ENCODE measurements at regions of chr20 and their contacts with region 1.

Region 1: GRCh38 chr20:44388466-44389023 is 33.0 kb downstream of the HNF4A start:
- DNase-seq: peak; percentile 38
- H3K4me3 ChIP-seq: peak overlapping the region in 1 of 3 experiments; percentile 13
- H3K27ac ChIP-seq: no peak overlapping the region
- H3K4me1 ChIP-seq: peaks cover 16% of the 10 kb centered on the region
- H3K27me3 ChIP-seq: no peaks in the 10 kb centered on the region
- CTCF ChIP-seq: peak; percentile 90 to 94 (median 93)

Region 2: GRCh38 chr20:44210422-44211176 is 177.9 kb before region 1 on chr20 and contains the start of gene OSER1:
- dilution Hi-C with region 1: loop called (anchors 10 kb)
- DNase-seq: peak; percentile 91
- H3K4me3 ChIP-seq: peak within 1 kb of the TSS; percentile 82 to 96 (median 82)
- H3K27ac ChIP-seq: peak within 1 kb of the TSS; percentile 97
- H3K4me1 ChIP-seq: peaks cover 26% of the 10 kb centered on the region
- H3K27me3 ChIP-seq: no peaks in the 10 kb centered on the region
- CTCF ChIP-seq: no peak
- polyA plus RNA-seq, gene OSER1: 33.5 to 41.5 TPM (median 34.9 TPM) in 3 replicates

Region 3: DNA sequence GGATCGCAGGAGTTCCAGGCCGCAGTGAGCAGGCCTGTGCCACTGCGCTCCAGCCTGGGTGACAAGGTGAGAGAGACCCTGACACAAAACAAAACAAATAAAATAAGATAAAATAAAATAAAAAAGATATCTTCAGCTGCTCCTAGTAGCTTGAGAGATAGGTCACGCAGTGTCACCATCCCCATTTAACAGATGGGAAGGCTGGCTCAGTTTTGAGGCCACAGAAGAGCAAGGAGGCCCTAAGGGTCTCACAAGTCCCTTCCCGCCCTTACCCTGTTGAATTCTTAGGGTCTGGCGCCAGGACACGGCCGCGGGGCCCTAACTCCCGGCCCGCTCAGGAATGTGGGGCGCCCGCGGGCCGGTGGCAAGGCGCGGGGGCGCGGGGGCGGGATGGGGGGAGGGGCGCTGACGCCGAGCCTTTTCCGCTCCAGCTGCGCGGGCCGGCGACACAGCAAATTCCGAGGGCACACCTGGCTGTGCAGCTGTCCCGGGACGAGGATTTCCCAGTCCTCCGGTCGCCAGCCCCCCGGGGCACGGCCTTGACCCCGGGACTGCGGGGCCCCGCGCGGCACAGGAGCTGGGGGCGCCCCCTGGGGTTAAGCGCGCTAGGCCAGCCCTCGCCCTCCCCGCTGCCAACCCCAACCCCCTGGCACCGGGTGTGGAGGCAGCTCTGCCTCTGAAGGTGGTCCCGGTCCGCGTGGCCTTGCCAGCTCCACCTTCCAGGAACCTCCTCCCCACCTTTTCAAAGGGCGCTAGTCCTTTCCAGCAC is 62.0 kb before region 1 on chr20:
- dilution Hi-C with region 1: loop called (anchors 10 kb)
- DNase-seq: no peak
- H3K4me3 ChIP-seq: peak overlapping the region in 1 of 3 experiments; percentile 12
- H3K27ac ChIP-seq: no peak overlapping the region
- H3K4me1 ChIP-seq: no peaks in the 10 kb centered on the region
- H3K27me3 ChIP-seq: no peaks in the 10 kb centered on the region
- CTCF ChIP-seq: peak in 1 of 3 experiments; percentile 7

Region 4: GRCh38 chr20:44467289-44467883 is 78.8 kb after region 1 on chr20:
- dilution Hi-C with region 1: loop called (anchors 5 kb)
- DNase-seq: no peak
- H3K4me3 ChIP-seq: no peak overlapping the region
- H3K27ac ChIP-seq: no peak overlapping the region
- H3K4me1 ChIP-seq: peaks cover 10% of the 10 kb centered on the region
- H3K27me3 ChIP-seq: no peaks in the 10 kb centered on the region
- CTCF ChIP-seq: no peak

Region 5: DNA sequence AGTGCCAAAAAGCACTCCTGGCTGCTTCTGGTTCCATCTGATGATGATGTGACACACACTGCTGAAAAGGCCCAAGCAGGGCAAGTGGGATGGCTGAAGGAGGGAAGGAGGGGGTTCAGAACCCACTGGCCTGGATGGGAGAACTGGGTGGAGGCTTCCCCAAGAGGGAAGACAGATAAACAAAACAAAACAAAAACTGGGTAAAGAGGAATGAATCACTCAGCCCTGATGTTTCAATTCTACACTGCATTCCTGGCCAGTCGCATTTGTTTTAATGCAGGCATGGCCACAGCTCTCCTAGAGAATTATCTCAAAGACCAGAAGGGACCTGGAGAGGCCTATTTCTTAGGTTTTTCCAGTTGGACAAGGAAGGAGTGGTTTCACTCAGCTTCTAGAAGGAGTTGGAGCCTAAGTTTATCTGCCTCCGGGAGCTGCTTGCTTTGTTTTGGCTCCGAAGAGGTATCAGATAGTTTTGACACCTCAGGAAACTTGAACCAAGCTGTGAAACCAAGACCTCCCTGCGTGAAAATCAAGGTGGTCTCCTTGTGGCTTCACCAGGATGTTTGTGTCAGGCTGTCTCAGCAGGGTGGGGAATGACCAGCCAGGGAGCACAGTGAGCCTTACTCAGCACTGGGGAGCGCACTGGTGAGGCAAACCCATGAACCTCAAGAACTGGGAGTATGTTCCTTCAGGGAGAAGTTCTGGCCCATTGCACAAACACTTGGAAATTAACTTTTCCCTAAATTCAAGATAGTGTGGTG is 103.3 kb after region 1 on chr20:
- dilution Hi-C with region 1: no loop called
- DNase-seq: no peak
- H3K4me3 ChIP-seq: no peak overlapping the region
- H3K27ac ChIP-seq: peak overlapping the region; percentile 47
- H3K4me1 ChIP-seq: peaks cover 28% of the 10 kb centered on the region
- H3K27me3 ChIP-seq: no peaks in the 10 kb centered on the region
- CTCF ChIP-seq: no peak

Region 6: DNA sequence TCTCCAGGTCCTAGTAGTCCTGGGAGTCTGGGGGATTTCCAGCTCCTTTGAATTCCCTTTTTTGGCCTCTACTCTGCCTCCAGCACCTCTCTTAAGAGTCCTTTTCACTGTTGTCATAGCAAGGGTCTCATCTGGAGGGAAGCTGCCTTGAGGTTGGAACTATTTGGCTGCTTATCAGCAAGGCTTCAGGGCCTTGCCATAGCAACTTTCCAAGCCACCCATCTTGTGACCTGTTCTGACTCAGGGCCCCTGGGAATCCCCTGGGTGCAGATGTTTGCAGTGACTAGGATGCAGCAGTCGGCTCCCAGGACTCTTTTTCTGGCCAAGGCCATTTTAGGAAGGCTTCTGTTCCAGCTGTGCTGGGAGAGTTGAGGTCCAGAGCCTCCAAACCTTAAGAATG is 206.2 kb after region 1 on chr20:
- dilution Hi-C with region 1: no loop called
- DNase-seq: no peak
- H3K4me3 ChIP-seq: no peak overlapping the region
- H3K27ac ChIP-seq: no peak overlapping the region
- H3K4me1 ChIP-seq: peaks cover 2% of the 10 kb centered on the region
- H3K27me3 ChIP-seq: no peaks in the 10 kb centered on the region
- CTCF ChIP-seq: no peak

Measured in keratinocyte (primary cell).